Activated T-helper 1 cell treated with anti-CD3 and anti-CD28 coated beads, Interleukin-12 subunit alpha, Interleukin-12 subunit beta, Interleukin-2, Interleukin-4 antibody, amounts not matched to agents 30 ng/mL and 10 ng/mL and 1 ng/mL, durations not matched to agents 14 hours and 24 hours and 36 hours (primary cell): ENCODE measurements at regions of chr22 and their contacts with region 1.

Region 1: GRCh38 chr22:37244114-37244921 is at the start of gene RAC2:
- DNase-seq: peak; percentile 83
- H3K4me3 Mint-ChIP-seq: peak within 1 kb of the TSS; percentile 99
- H3K27ac Mint-ChIP-seq: peak within 1 kb of the TSS; percentile 99
- H3K4me1 Mint-ChIP-seq: peaks cover 46% of the 10 kb centered on the region
- H3K27me3 Mint-ChIP-seq: no peaks in the 10 kb centered on the region
- total RNA-seq, gene RAC2: 592 and 614 TPM in 2 replicates

Region 2: DNA sequence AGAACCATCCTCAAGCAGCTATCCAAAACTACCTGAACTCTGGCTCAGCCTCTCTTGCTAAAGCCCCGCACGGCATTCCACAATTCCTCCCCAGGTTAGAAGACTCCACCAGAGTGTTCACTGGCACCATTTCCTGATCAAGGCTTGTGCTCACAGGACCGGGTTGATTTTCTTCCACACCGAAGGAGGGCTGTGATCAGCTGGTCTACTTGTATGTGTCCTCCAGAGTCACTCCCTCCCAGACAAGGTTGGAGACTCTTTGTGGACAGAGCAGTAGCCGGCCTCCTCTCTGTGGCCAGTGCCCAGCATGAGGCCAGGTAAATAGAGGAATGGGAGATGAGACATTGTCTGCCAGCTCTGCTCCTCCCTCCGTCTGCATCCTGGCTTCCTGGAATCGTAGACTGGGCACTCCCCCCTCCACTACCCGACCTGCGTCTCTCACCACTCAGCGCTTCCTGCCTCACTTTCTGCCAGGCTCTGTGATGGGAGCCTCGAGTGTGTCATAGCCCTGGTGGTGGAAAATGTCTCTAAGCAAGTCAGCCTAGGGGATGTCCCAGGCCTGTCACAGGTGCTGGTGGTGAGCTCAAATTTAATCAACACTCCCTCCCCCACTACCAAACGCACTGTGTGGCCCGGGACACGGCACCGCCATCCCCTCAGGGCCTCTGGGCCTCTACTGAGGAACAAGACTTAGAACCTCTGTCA is 122.3 kb before region 1 on chr22:
- intact Hi-C with region 1: loop called (anchors 1 kb)
- DNase-seq: peak; percentile 93
- H3K4me3 Mint-ChIP-seq: peak overlapping the region; percentile 86
- H3K27ac Mint-ChIP-seq: peak overlapping the region; percentile 100
- H3K4me1 Mint-ChIP-seq: peaks cover 85% of the 10 kb centered on the region
- H3K27me3 Mint-ChIP-seq: peaks cover 2% of the 10 kb centered on the region

Region 3: GRCh38 chr22:37138849-37139561 is 105.3 kb before region 1 on chr22:
- intact Hi-C with region 1: no loop called
- DNase-seq: no peak
- H3K4me3 Mint-ChIP-seq: peak overlapping the region; percentile 21
- H3K27ac Mint-ChIP-seq: peak overlapping the region; percentile 91
- H3K4me1 Mint-ChIP-seq: peaks cover 50% of the 10 kb centered on the region
- H3K27me3 Mint-ChIP-seq: no peaks in the 10 kb centered on the region

Region 4: DNA sequence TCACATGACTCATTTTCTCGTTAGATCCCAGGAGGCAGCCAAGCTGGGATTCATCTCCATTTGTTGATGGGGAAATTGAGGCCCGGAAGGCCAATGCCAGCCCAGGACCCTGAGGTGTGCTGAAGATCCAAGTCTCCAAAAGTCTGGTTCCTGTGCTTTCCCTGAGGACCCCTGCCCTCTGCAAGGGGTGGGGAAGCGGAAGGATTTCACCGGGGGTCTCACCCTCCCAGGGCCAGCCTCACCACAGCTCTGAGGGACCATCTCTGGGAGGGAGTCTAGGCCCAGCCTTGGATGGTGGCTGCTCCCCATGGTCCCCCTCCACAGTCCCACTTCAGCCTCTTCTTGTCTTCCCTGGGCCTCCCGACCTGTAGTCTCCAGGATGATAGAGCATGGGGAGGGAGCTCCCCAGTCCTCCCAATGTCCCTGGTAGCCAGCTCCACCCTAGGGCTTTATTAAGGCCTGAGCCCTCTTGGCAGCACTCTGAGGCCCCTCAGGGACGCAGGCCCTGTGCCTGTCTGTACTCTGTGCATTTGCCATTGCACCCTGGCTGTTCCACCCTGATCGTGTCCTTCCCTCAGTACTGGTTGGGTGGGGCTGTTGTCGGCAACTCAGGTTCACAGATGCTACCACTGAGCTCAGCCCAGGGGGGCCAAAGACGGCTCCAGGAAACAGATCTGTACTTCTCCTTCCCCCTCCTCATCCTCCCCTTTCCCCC is 39.4 kb before region 1 on chr22:
- intact Hi-C with region 1: loop called (anchors 1 kb)
- DNase-seq: no peak
- H3K4me3 Mint-ChIP-seq: no peak overlapping the region
- H3K27ac Mint-ChIP-seq: no peak overlapping the region
- H3K4me1 Mint-ChIP-seq: peaks cover 9% of the 10 kb centered on the region
- H3K27me3 Mint-ChIP-seq: no peaks in the 10 kb centered on the region

Region 5: GRCh38 chr22:37229805-37230672 is 14.3 kb before region 1 on chr22:
- intact Hi-C with region 1: loop called (anchors 1 kb)
- DNase-seq: peak; percentile 87
- H3K4me3 Mint-ChIP-seq: peak overlapping the region; percentile 80
- H3K27ac Mint-ChIP-seq: peak overlapping the region; percentile 99
- H3K4me1 Mint-ChIP-seq: peaks cover 88% of the 10 kb centered on the region
- H3K27me3 Mint-ChIP-seq: no peaks in the 10 kb centered on the region

Region 6: DNA sequence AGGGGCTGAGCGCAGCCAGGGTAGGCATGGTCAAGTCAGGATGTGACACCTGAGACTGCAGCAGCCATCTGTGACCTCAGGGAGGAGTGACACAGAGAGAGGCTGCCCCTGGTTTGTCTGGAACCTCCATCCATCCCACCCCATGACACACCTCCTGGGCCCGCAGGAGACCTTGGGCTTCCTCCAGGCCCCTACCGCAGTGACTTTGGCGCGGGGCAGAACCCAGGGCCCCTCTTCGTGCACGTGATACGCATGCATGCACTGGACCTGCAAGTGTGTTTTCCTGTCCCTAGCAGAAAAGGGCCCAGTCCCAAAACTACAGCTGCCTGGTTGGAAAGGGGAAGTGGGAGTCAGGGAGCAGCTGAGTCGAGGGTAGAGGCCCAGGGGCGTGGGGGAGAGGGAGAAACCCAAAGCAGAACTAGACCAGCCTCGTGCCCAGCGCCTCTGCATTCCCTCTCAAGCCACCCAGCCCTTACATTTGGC is 30.1 kb after region 1 on chr22:
- intact Hi-C with region 1: loop called (anchors 1 kb)
- DNase-seq: no peak
- H3K4me3 Mint-ChIP-seq: no peak overlapping the region
- H3K27ac Mint-ChIP-seq: no peak overlapping the region
- H3K4me1 Mint-ChIP-seq: peaks cover 50% of the 10 kb centered on the region
- H3K27me3 Mint-ChIP-seq: peaks cover 4% of the 10 kb centered on the region

Region 7: DNA sequence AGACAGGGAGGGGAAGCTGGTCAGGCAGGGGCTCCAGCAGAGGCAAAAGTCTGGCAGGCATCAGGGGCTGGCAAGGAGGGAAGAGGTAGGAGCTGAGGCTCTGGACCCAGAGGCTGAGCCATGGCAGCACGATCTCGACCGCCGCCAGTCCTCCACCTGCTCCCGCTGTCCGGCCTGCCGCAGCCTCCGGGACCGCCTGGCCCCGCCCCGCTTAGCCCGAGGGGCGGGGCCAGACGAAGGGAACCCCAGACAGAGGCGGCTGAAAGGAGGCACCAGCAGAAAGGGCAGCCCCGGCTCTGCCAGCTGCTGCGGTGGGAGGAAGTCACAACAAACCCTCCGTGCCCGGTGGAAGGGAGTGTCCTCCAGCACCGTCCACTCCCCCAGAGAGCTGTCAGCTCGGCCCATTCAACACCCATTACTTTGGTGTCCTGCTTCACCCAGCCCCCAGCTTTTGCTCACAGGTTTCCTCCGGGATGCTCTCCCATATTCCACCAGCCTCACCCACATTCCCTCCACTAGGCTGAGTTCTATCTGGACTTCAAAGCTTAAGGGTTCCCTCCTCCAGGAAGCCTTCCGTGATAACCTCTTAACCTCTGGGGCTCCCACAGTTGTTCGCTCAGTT is 242.0 kb after region 1 on chr22 and contains the start of gene MFNG:
- intact Hi-C with region 1: loop called (anchors 1 kb)
- DNase-seq: peak; percentile 69
- H3K4me3 Mint-ChIP-seq: peak within 1 kb of the TSS; percentile 92
- H3K27ac Mint-ChIP-seq: peak within 1 kb of the TSS; percentile 93
- H3K4me1 Mint-ChIP-seq: peaks cover 44% of the 10 kb centered on the region
- H3K27me3 Mint-ChIP-seq: no peaks in the 10 kb centered on the region
- total RNA-seq, gene MFNG: 213 and 214 TPM in 2 replicates